Naive thymus-derived CD4-positive, alpha-beta T cell (primary cell): ENCODE measurements at regions of chr14 and their contacts with region 1.

Region 1: DNA sequence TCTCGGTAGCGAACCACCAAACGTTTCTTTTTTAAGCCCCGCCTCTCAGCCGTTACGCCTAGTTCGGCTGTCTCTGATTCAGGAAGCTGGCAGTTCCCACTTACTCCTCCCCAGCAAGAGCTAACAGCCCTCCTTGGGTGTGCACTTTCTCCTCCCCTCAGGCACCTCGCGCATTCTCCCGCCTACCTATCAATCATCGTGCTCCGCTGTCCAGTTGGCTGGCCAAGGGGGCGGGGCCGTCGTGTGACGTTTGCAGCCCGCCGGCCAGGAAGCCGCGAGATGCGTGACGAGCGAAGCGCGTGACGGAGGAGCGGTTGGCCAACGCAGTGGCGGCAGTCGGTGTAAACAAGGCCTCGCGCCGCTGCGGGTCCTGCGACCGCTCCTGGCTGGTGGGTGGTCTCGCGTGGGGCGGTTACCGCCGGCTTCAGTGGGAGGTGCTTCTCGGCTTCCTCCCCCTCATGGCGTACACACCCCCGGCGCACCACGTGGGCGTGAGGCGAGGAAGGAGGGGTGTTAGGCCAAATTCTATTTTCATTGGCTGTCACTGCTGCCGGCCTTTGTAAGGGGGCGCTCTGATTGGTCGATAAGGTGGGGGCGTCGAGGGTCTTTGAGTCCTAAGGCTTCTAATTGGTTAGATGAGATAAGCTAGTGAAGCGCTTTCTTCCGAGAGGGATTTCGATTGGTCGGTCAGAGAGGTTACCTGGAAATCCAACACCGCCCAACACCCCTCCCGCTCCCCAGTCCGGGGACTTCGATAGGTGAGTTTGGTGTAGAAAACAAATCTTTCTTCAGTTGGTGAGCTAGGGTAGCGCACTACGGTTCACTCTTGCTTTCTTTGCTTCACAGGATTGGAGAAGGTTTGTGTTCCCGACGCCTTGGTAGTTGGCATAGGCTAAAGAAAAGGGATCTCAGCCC is at the starts of genes DCAF11 and NRL:
- DNase-seq: peak; percentile 97 to 100 (median 100)
- ATAC-seq: peak; percentile 90
- H3K4me3 ChIP-seq: peak within 1 kb of the TSS; percentile 99
- H3K4me3 Mint-ChIP-seq: peak within 1 kb of the TSS; percentile 93 to 100 (median 96)
- H3K27ac ChIP-seq: peak within 1 kb of the TSS; percentile 93
- H3K27ac Mint-ChIP-seq: peak within 1 kb of the TSS; percentile 96 to 100 (median 99)
- H3K4me1 ChIP-seq: peaks cover 18 to 20% of the 10 kb centered on the region in 2 donors
- H3K4me1 Mint-ChIP-seq: peaks cover 18 to 44% (median 37%) of the 10 kb centered on the region in 7 donors
- H3K27me3 ChIP-seq: no peaks in the 10 kb centered on the region
- H3K27me3 Mint-ChIP-seq: peaks cover 0 to 3% (median 0%) of the 10 kb centered on the region in 5 donors
- total RNA-seq, gene DCAF11: 71.9 to 90.1 (median 83.3) TPM
- total RNA-seq, gene NRL: 2.1 to 4.5 (median 3.8) TPM

Region 2: GRCh38 chr14:23137192-23137829 is 977.5 kb before region 1 on chr14:
- CTCF ChIA-PET with region 1: no interaction called
- POLR2A ChIA-PET with region 1: no interaction called
- intact Hi-C with region 1: no loop called
- DNase-seq: no peak
- ATAC-seq: no peak
- H3K4me3 ChIP-seq: no peak overlapping the region
- H3K4me3 Mint-ChIP-seq: no peak overlapping the region
- H3K27ac ChIP-seq: no peak overlapping the region
- H3K27ac Mint-ChIP-seq: no peak overlapping the region
- H3K4me1 ChIP-seq: no peaks in the 10 kb centered on the region
- H3K4me1 Mint-ChIP-seq: peaks cover 0 to 4% (median 0%) of the 10 kb centered on the region in 7 donors
- H3K27me3 ChIP-seq: no peaks in the 10 kb centered on the region
- H3K27me3 Mint-ChIP-seq: peaks cover 0 to 10% (median 0%) of the 10 kb centered on the region in 5 donors

Region 3: DNA sequence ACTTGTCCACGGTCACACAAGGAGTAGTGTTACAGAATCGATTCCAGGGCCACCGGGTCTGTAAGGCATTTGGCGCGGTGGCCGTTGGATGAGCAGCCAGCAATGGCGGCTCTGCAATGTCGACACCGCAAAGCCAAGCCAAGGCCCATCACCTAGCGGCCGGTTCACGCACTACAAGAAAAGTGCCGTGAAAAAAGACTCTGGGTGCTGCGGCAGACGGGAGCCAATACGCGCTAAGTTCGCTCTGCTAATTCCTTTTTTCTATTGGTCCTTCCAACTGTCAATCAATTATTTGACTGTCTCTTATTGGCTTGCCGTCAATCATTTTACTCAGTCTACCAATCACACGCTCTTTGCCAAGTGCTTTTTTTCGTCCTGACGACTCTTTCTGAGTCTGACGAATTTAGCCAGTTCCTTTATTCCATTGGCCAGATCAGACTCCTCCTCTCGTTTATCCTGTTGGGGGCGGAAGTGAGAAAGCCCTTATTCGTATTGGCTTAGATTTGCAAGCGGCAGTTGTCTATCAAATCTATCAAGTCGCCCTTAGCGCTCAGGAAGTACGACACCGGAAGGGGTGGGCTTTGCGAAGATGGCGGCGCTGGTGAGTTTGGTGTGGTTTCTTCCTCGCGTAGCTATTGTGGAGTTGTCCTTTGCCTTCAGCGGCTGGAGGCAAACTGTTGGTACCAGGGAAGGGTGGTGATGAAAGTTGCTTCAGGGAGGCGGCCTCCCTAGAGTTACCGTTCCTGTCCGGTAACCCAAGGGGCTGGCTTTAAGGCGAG is 645.5 kb before region 1 on chr14 and contains the start of gene NGDN:
- CTCF ChIA-PET with region 1: no interaction called
- POLR2A ChIA-PET with region 1: no interaction called
- intact Hi-C with region 1: loop called in 1 of 2 experiments (anchors 1 kb)
- DNase-seq: peak; percentile 76 to 99 (median 96)
- ATAC-seq: peak; percentile 94
- H3K4me3 ChIP-seq: peak within 1 kb of the TSS; percentile 73
- H3K4me3 Mint-ChIP-seq: peak within 1 kb of the TSS in 1 of 10 donors; percentile 77
- H3K27ac ChIP-seq: peak within 1 kb of the TSS; percentile 94
- H3K27ac Mint-ChIP-seq: peak within 1 kb of the TSS in 2 of 9 donors; percentile 26 to 68
- H3K4me1 ChIP-seq: peaks cover 6 to 11% of the 10 kb centered on the region in 2 donors
- H3K4me1 Mint-ChIP-seq: peaks cover 7 to 10% (median 7%) of the 10 kb centered on the region in 7 donors
- H3K27me3 ChIP-seq: no peaks in the 10 kb centered on the region
- H3K27me3 Mint-ChIP-seq: no peaks in the 10 kb centered on the region
- total RNA-seq, gene NGDN: 52.9 to 152 (median 74.0) TPM

Region 4: GRCh38 chr14:24080888-24081738 is 33.7 kb before region 1 on chr14:
- CTCF ChIA-PET with region 1: interaction called, 43 read pairs
- POLR2A ChIA-PET with region 1: interaction called, 58 read pairs
- intact Hi-C with region 1: loop called (anchors 1 to 2 kb)
- DNase-seq: peak; percentile 46 to 75 (median 72)
- ATAC-seq: peak; percentile 92
- H3K4me3 ChIP-seq: peak overlapping the region; percentile 82
- H3K4me3 Mint-ChIP-seq: peak overlapping the region; percentile 80 to 90 (median 86)
- H3K27ac ChIP-seq: peak overlapping the region; percentile 75
- H3K27ac Mint-ChIP-seq: peak overlapping the region; percentile 32 to 92 (median 85)
- H3K4me1 ChIP-seq: peaks cover 7 to 14% of the 10 kb centered on the region in 2 donors
- H3K4me1 Mint-ChIP-seq: peaks cover 16 to 20% (median 18%) of the 10 kb centered on the region in 7 donors
- H3K27me3 ChIP-seq: no peaks in the 10 kb centered on the region
- H3K27me3 Mint-ChIP-seq: peaks cover 0 to 20% (median 0%) of the 10 kb centered on the region in 5 donors

Region 5: DNA sequence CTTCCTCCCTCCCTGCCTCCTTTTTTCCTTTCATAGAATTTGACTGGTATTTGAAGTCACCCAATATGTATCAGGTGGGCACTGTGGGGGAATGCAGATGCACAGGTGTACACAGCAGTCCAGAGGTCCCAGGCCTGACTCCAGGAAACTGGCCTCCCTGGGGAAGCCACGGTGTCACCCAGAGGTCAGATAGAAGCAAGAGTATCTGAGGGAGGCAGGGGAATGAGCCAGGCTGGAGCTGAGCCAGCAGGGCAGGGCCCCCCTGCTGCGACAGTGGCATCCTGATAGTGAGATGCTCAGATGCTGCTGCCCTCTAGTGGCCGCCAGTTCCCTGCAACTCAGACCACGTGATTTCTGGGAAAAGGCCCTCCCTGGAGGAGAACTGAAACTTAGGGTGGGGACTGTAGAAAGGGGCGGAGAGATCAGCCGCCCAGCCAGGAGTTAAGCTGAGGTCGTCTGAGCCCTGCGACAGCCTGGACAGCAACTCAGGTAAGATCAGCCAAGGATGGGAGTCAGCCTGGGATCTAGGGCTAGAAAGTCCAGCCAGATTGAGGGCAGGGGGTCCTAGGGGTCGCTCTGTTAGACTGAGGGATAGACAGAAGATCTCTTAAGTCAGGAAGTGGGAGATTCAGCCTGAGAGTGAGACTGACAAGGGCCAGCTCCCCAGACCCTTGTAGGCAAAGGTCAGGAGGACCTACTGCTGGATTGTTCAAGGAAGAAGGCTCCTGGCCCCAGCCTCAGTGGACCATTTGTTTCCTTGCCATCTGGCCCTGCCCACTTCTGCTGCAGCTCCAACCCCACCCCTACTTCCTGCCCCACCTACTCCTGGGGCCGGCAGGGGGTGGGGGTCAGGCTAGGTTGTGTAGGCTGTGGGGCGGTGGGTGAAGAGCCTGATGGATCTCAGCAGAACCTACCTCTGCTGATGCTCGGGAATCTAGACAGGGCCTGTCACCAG is 46.3 kb after region 1 on chr14 and contains the start of gene IRF9:
- CTCF ChIA-PET with region 1: interaction called, 19 read pairs
- POLR2A ChIA-PET with region 1: interaction called, 56 read pairs
- intact Hi-C with region 1: loop called (anchors 1 kb)
- DNase-seq: peak; percentile 93 to 98 (median 96)
- ATAC-seq: peak; percentile 98
- H3K4me3 ChIP-seq: peak within 1 kb of the TSS; percentile 89
- H3K4me3 Mint-ChIP-seq: peak within 1 kb of the TSS; percentile 95 to 100 (median 100)
- H3K27ac ChIP-seq: peak within 1 kb of the TSS; percentile 99
- H3K27ac Mint-ChIP-seq: peak within 1 kb of the TSS; percentile 98 to 100 (median 100)
- H3K4me1 ChIP-seq: peaks cover 34 to 45% of the 10 kb centered on the region in 2 donors
- H3K4me1 Mint-ChIP-seq: peaks cover 38 to 69% (median 56%) of the 10 kb centered on the region in 7 donors
- H3K27me3 ChIP-seq: no peaks in the 10 kb centered on the region
- H3K27me3 Mint-ChIP-seq: peaks cover 0 to 4% (median 0%) of the 10 kb centered on the region in 5 donors
- total RNA-seq, gene IRF9: 133 to 337 (median 189) TPM

Region 6: GRCh38 chr14:24241829-24242443 is 127.1 kb after region 1 on chr14:
- CTCF ChIA-PET with region 1: interaction called, 5 read pairs
- POLR2A ChIA-PET with region 1: interaction called, 19 read pairs
- intact Hi-C with region 1: loop called (anchors 1 kb)
- DNase-seq: peak in 7 of 9 donors; percentile 94 to 98 (median 97)
- ATAC-seq: peak; percentile 89
- H3K4me3 ChIP-seq: peak overlapping the region; percentile 78
- H3K4me3 Mint-ChIP-seq: peak overlapping the region; percentile 84 to 99 (median 98)
- H3K27ac ChIP-seq: peak overlapping the region; percentile 98
- H3K27ac Mint-ChIP-seq: peak overlapping the region; percentile 98 to 100 (median 100)
- H3K4me1 ChIP-seq: peaks cover 40 to 41% of the 10 kb centered on the region in 2 donors
- H3K4me1 Mint-ChIP-seq: peaks cover 42 to 71% (median 62%) of the 10 kb centered on the region in 7 donors
- H3K27me3 ChIP-seq: no peaks in the 10 kb centered on the region
- H3K27me3 Mint-ChIP-seq: no peaks in the 10 kb centered on the region

Region 7: DNA sequence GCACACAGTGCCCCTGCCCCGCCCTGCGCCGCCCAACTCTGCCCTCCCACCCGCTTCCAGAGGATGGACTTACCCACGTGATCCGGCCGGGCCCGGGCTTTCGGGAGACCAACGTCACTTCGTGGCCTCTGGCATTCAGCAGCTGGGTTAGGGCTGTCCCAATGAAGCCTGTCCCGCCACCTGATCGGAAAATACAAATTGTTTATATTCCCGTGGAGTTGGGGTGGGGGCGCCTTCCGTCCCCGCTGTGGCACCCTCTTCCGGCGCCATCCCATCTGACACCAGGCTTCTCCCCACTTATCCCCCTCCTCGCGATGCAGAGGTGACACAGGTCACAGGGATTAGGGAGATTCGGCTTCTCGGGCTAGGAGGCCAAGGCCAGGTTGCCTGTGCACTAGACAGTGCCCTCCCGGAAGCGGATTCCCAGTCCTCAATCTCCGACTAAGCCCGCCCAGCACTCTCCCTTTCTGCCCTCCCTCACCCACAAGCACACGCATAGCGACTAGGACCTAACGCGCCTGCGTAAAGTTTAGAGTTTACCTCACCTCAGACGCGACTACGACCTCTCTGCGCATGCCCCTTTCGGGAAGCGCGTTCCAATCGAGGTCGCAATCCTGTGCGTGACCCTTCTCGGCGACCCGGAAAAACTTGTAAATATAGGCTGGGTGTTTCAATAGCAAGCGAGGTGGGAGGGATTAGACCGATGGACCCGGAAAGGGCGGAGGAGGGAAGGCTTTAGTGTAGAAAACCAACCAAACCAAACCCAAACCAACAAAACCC is 327.7 kb after region 1 on chr14 and contains the start of gene SDR39U1:
- CTCF ChIA-PET with region 1: no interaction called
- POLR2A ChIA-PET with region 1: interaction called, 13 read pairs
- intact Hi-C with region 1: loop called in 1 of 2 experiments (anchors 1 kb)
- DNase-seq: peak; percentile 81 to 99 (median 98)
- ATAC-seq: peak; percentile 93
- H3K4me3 ChIP-seq: peak within 1 kb of the TSS; percentile 85
- H3K4me3 Mint-ChIP-seq: peak within 1 kb of the TSS; percentile 91 to 98 (median 95)
- H3K27ac ChIP-seq: peak within 1 kb of the TSS; percentile 98
- H3K27ac Mint-ChIP-seq: peak within 1 kb of the TSS; percentile 92 to 99 (median 98)
- H3K4me1 ChIP-seq: peaks cover 20 to 32% of the 10 kb centered on the region in 2 donors
- H3K4me1 Mint-ChIP-seq: peaks cover 27 to 57% (median 49%) of the 10 kb centered on the region in 7 donors
- H3K27me3 ChIP-seq: no peaks in the 10 kb centered on the region
- H3K27me3 Mint-ChIP-seq: peaks cover 0 to 3% (median 0%) of the 10 kb centered on the region in 5 donors
- total RNA-seq, gene SDR39U1: 64.7 to 137 (median 96.2) TPM